ENCODE measurements at regions of chr20 and their contacts with region 1.

Region 1: DNA sequence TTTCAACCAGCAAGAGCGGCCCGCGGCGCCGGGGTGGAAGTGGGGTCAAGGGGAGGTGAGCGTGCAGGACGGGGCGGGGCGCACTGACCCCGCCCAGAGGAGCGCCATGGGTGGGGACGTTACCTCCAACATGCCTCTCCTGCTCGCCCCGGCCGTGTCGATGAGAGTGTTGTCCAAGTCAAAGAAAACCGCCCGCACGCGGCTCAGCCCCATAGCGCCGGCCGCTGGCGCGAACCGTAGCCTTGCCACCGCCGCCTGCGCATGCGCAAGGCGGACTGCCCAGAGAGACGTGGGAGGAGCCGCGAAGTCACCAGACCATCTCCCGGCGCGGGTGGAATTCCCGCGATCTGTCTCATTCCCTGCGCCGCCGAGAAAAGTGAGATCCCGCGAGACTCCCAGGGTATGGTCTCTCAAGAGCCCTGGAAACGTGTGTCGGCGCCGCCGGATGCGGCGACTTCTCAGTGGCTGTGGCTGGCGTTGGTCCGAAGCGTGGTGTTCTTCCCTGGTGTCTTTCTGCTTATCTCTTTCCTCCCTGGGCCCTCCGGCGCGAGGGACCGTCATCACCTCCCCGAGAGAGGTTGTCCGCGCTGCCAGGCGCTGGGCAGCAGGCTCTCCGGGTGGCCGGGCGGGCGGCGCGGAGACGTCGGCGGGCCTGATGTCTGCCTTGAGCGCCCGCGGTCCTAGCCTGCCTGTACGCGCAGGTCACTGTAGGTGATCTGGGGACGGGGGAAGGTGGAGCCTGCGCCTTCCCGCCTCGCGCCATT is at the start of gene NANP:
- DNase-seq: peak; percentile 94
- H3K4me3 ChIP-seq: peak within 1 kb of the TSS; percentile 77
- H3K27ac ChIP-seq: peak within 1 kb of the TSS; percentile 90
- H3K4me1 ChIP-seq: no peaks in the 10 kb centered on the region
- H3K27me3 ChIP-seq: no peaks in the 10 kb centered on the region
- CTCF ChIP-seq: no peak
- total RNA-seq, gene NANP: 3.1 to 3.3 TPM

Region 2: DNA sequence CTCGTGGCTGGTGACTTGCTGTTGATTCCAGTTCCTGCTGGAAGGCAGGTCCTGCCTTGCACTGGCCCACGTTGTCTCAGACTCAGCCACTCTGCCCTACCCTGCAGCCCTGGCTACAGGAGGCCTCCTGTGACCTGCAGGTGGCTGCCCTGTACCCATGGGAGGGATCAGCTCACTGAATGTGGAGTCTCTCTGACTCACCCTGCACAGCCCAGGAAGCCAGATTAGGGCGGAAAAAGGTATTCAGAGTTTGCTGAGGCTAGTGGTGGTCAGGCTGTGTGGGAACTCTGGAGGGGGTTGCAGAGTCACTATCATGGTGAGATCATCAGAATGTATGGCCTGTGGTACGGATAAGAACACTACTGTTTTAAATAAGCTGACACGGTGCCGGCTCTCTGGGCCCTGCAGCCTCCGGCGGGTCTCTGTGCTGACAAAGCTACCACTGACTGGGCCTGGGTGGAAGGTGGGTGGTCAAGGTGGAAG is 400.7 kb before region 1 on chr20:
- intact Hi-C with region 1: no loop called
- DNase-seq: peak; percentile 73
- H3K4me3 ChIP-seq: no peak overlapping the region
- H3K27ac ChIP-seq: peak overlapping the region; percentile 36
- H3K4me1 ChIP-seq: no peaks in the 10 kb centered on the region
- H3K27me3 ChIP-seq: no peaks in the 10 kb centered on the region
- CTCF ChIP-seq: peak; percentile 16

Region 3: DNA sequence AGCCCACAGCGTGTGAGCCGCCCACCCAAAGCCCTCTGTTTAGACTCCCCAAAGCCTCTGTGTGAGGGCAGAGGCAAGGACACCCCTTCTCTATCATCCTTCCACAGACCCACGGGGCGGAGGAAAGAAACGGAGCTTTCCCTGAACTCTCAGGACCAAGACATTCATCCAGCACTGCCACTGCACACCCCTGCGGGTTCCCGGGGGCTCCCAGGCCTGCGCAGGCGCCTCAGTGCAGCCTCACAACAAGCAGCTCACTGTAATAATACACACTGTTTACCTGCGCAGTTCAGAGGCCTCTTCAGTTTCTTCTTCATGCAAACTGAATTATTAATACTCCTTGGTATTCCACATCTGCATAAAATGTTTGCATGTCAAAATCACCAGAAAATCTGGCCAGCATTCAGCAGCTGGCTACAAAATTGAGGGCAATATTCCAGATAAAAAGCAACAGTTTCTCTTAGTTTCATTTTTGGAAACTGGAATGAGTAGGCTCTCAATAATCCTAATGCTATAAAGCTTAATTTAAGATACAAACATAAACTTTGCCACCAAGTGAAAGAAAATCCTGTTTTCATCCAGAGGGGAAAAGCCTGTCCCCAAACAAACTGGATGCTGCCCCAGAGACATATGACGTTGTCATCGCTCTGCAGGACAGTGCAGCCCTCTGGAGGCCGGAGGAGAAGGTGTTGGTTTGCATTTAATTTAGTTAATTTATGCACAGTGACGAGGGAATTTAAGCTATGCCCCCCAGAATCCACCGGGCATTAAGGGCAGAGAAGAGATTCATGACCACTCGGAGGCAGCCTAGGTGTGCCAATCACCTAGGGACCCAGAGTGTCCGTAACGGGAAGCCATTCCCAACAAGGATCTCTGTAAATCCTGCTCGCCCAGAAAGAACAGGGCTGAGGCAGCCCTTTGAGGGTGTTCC is 83.9 kb before region 1 on chr20:
- intact Hi-C with region 1: loop called (anchors 5 kb)
- DNase-seq: no peak
- H3K4me3 ChIP-seq: peak overlapping the region; percentile 3
- H3K27ac ChIP-seq: no peak overlapping the region
- H3K4me1 ChIP-seq: no peaks in the 10 kb centered on the region
- H3K27me3 ChIP-seq: no peaks in the 10 kb centered on the region
- CTCF ChIP-seq: peak; percentile 23

Region 4: DNA sequence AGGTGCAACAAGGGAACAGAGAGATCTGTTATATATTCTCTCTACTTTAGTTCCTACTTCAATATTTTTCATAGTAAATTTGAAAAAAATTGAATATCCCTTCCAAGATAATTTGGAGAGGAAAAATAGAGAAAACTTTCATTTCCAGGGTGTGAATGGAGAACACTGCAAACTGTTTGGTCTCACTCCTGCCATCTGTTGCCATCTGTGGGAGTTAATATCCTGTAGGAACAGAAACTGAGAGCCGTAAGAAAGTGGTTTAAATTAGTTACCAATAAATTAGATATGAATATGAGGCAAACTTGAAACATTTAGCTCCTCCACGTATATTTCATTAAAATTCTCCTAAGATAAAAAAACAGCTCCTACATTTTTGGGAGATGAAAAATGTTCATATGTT is 68.6 kb after region 1 on chr20:
- intact Hi-C with region 1: loop called (anchors 5 kb)
- DNase-seq: no peak
- H3K4me3 ChIP-seq: no peak overlapping the region
- H3K27ac ChIP-seq: no peak overlapping the region
- H3K4me1 ChIP-seq: peaks cover 5% of the 10 kb centered on the region
- H3K27me3 ChIP-seq: no peaks in the 10 kb centered on the region
- CTCF ChIP-seq: no peak